A549 (cell line): ENCODE measurements at regions of chrX and their contacts with region 1.

Region 1: GRCh38 chrX:133838761-133839676 is 146.4 kb downstream of the GPC3 start:
- DNase-seq: peak; percentile 15 to 33
- ATAC-seq: peak in 1 of 2 experiments; percentile 59; a peak in 2 of 6 replicates
- H3K4me3 ChIP-seq: no peak overlapping the region
- H3K27ac ChIP-seq: no peak overlapping the region
- H3K4me1 ChIP-seq: no peaks in the 10 kb centered on the region
- CTCF ChIP-seq: peak; percentile 52
- EP300 ChIP-seq: no peak
- POLR2A ChIP-seq: no peak
- RAD21 ChIP-seq: peak in 1 of 2 experiments; percentile 26; a peak in 2 of 5 replicates

Region 2: DNA sequence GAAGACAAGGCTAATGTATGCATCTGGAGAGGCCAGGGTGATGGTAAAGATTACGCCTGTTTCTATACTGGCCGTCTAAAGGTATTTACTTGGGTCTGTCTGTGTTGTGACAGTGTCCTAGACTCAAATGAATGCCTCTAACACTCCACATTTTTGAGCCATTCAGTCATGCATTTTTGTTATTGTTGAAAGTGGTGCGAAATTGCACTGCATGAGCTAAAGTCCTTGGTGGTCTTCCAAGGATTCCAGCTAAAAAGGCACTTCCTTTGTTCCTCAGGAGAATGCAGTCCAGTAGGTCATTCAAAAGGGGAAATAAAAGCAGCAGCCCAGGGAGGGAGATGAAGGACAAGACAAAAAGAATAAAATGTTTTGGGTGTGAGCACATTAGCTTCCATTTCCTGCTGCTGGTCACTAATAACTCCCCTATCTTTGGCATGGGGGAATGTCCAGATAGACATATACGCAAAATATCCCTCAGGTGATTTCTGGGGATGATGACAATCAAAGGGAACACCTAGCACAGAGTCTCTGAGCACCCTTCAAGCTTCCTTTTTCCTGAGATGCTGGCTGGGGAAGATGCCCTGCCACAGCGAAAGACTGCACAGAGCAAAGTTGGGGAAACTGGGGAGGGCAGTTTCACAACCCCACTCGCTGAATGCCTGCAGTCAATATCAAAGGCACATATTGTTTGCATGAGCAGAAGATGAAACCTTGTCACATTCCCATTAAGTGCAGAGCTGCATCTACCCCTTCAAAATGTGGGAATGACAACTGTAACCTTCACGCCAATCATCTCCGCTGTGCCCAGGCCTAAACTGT is 426.6 kb before region 1 on chrX:
- CTCF ChIA-PET with region 1: no interaction called
- POLR2A ChIA-PET with region 1: no interaction called
- DNase-seq: no peak
- ATAC-seq: no peak
- H3K4me3 ChIP-seq: no peak overlapping the region
- H3K27ac ChIP-seq: no peak overlapping the region
- H3K4me1 ChIP-seq: peaks cover 8% of the 10 kb centered on the region; the same call in 2 of the 3 replicates
- CTCF ChIP-seq: no peak
- EP300 ChIP-seq: no peak
- POLR2A ChIP-seq: no peak
- RAD21 ChIP-seq: no peak

Region 3: GRCh38 chrX:133852837-133853356 is 13.9 kb after region 1 on chrX:
- CTCF ChIA-PET with region 1: interaction called, 10 read pairs
- POLR2A ChIA-PET with region 1: no interaction called
- DNase-seq: no peak
- ATAC-seq: no peak
- H3K4me3 ChIP-seq: no peak overlapping the region
- H3K27ac ChIP-seq: no peak overlapping the region
- H3K4me1 ChIP-seq: no peaks in the 10 kb centered on the region
- CTCF ChIP-seq: no peak
- EP300 ChIP-seq: no peak
- POLR2A ChIP-seq: no peak
- RAD21 ChIP-seq: no peak

Region 4: DNA sequence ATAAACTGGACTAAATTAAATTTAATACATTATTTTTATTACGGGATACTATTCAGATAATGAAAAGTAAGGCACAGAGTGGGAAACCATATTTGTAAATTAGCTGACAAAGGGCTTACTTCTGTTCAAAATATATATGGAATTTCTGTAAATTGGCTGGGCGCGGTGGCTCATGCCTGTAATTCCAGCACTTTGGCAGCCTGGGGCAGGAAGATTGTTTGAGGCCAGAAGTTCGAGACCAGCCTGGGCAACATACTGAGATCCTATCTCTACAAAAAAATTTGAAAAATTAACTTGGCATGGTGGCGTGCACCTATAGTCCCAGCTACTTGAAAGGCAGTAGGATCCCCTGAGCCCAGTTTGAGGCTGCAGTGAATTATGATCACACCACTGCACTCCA is 517.0 kb after region 1 on chrX:
- CTCF ChIA-PET with region 1: no interaction called
- POLR2A ChIA-PET with region 1: no interaction called
- DNase-seq: no peak
- ATAC-seq: no peak
- H3K4me3 ChIP-seq: no peak overlapping the region
- H3K27ac ChIP-seq: no peak overlapping the region
- H3K4me1 ChIP-seq: no peaks in the 10 kb centered on the region
- CTCF ChIP-seq: no peak
- EP300 ChIP-seq: no peak
- POLR2A ChIP-seq: no peak
- RAD21 ChIP-seq: no peak